ENCODE measurements at regions of chr14 and their contacts with region 1.

Region 1: GRCh38 chr14:63388763-63389431 is 70.2 kb upstream of the GPHB5 start:
- DNase-seq: no peak
- H3K4me3 ChIP-seq: no peak overlapping the region
- H3K27me3 ChIP-seq: no peaks in the 10 kb centered on the region
- CTCF ChIP-seq: peak; percentile 85

Region 2: GRCh38 chr14:63543000-63543825 is 154.3 kb after region 1 on chr14 and contains the start of gene PPP2R5E:
- CTCF ChIA-PET with region 1: interaction called, 30 read pairs
- POLR2A ChIA-PET with region 1: interaction called, 3 read pairs
- DNase-seq: peak; percentile 93
- H3K4me3 ChIP-seq: peak within 1 kb of the TSS; percentile 76
- H3K27me3 ChIP-seq: no peaks in the 10 kb centered on the region
- CTCF ChIP-seq: no peak
- polyA plus RNA-seq, gene PPP2R5E: 4.8 and 11.9 TPM in 2 replicates

Region 3: DNA sequence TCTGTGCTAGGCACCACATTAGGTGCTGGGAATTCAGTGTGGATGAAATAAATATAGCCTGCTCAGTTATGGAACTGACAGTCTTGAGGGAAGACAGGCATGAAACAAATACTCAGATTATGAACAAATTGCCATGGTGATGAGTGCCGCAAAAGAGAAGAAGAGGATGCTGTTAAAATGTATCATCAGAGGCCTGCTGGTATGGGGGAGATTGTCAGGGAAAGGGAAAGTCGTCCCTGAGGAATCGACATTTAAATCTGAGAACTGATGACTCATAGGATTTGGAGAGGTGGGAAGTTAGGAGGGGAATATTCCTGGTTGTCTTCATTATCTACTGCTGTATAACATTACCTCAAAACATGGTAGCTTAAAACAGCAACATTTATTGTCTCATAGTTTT is 1202.9 kb after region 1 on chr14:
- CTCF ChIA-PET with region 1: no interaction called
- POLR2A ChIA-PET with region 1: no interaction called
- DNase-seq: no peak
- H3K4me3 ChIP-seq: no peak overlapping the region
- H3K27me3 ChIP-seq: no peaks in the 10 kb centered on the region
- CTCF ChIP-seq: no peak